GM13977 (cell line): ENCODE measurements at regions of chr13 and their contacts with region 1.

Region 1: GRCh38 chr13:48595431-48596429 is 58.0 kb upstream of the CYSLTR2 start:
- DNase-seq: peak; percentile 34
- CTCF ChIP-seq: peak; percentile 59

Region 2: GRCh38 chr13:48126944-48127830 is 468.5 kb before region 1 on chr13:
- in situ Hi-C with region 1: loop called (anchors 25 kb)
- DNase-seq: peak; percentile 59
- CTCF ChIP-seq: peak; percentile 58

Region 3: DNA sequence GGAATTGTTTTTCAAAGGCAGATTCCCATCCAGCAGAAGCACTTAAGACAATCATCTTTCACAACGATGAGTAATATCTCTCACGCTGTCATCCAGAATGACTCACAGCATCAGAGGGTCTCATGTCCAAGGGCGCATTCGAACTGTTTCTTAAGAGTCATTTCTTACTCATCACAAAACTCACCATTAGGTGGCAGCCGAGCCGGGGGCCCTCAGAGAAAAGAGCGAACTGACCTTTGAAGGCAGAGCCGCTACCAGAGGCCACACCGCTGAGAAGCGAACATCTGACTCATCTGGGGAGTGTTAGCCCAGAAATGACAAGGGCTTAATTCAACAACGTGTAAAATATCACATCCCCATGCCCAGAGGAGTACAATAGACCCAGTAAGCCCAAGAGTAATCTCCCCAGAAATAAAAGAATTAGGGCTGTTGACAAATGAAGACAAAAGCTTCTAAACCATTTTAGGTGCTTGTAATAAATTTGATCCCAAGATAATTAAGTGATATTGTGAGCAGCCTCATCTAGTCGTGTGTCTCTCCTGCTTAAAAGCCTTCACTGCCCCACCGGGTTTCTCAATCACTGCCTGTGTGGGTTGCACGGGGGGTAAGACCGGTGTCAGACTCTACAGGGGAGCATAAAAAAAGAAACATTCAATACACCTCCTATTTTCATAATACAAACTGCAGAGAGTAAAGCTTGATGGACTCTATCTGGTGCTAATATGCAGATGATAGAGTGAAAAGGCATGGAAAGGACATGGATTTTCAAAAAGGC is 154.2 kb after region 1 on chr13:
- in situ Hi-C with region 1: loop called (anchors 10 kb)
- DNase-seq: peak; percentile 60
- CTCF ChIP-seq: peak; percentile 68

Region 4: GRCh38 chr13:48975856-48976575 is 380.3 kb after region 1 on chr13 and contains the start of gene FNDC3A:
- in situ Hi-C with region 1: no loop called
- DNase-seq: peak; percentile 93
- CTCF ChIP-seq: peak; percentile 20